ENCODE measurements at regions of chr17 and their contacts with region 1.

Region 1: DNA sequence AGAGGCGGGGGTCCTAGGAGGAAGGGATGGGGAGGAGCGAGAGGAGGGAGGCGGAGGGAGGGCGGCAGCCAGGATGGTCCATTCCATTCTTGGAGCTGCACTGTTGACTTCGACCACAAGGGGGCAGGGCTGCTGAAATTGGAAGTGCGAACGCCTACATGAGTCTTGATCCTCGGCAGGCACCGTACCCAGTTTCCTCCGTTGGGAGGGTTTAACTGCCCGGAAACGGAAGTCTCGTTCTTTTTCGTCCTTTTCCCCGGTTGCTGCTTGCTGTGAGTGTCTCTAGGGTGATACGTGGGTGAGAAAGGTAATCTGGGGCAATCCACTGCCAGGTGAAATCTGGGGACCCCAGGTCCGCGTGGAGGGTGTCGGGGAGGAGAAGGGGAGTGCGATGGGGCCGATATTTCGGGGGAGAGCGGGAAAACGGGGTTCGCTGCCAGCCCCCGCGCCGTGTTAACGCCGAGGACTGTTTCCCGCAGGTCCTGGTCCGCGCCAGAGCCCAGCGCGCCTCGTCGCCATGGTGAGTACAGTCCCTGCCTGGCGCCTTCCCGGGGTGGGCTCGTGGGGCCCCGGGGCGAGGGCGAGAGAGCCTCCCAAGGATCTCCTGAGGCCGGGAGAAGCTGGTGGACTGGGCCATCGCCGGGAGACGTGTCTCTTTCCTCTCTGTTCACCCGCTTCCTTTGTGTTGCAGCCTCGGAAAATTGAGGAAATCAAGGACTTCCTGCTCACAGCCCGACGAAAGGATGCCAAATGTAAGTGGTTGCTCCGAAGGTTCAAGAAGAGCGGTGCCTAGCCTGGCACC is at the start of gene RPL38:
- DNase-seq: peak; percentile 95 to 97
- H3K4me3 ChIP-seq: peak within 1 kb of the TSS; percentile 77 to 93
- H3K27ac ChIP-seq: peak within 1 kb of the TSS; percentile 79 to 80
- H3K4me1 ChIP-seq: peaks cover 0 to 46% (median 29%) of the 10 kb centered on the region in 4 donors
- H3K27me3 ChIP-seq: peaks cover 0 to 38% of the 10 kb centered on the region in 2 donors
- CTCF ChIP-seq: peak; percentile 93 to 97

Region 2: GRCh38 chr17:73092523-73093135 is 1111.0 kb before region 1 on chr17 and contains the start of gene SLC39A11:
- intact Hi-C with region 1: loop called (anchors 10 kb)
- DNase-seq: peak; percentile 93 to 97
- H3K4me3 ChIP-seq: peak within 1 kb of the TSS; percentile 61 to 78
- H3K27ac ChIP-seq: peak within 1 kb of the TSS; percentile 81 to 84
- H3K4me1 ChIP-seq: peaks cover 0 to 59% (median 43%) of the 10 kb centered on the region in 4 donors
- H3K27me3 ChIP-seq: no peaks in the 10 kb centered on the region
- CTCF ChIP-seq: no peak

Region 3: GRCh38 chr17:73643001-73643851 is 560.4 kb before region 1 on chr17:
- intact Hi-C with region 1: no loop called
- DNase-seq: no peak
- H3K4me3 ChIP-seq: peak overlapping the region; percentile 49 to 59
- H3K27ac ChIP-seq: peak overlapping the region in 1 of 2 donors; percentile 60
- H3K4me1 ChIP-seq: peaks cover 0 to 58% (median 40%) of the 10 kb centered on the region in 4 donors
- H3K27me3 ChIP-seq: peaks cover 0 to 62% of the 10 kb centered on the region in 2 donors
- CTCF ChIP-seq: no peak

Region 4: DNA sequence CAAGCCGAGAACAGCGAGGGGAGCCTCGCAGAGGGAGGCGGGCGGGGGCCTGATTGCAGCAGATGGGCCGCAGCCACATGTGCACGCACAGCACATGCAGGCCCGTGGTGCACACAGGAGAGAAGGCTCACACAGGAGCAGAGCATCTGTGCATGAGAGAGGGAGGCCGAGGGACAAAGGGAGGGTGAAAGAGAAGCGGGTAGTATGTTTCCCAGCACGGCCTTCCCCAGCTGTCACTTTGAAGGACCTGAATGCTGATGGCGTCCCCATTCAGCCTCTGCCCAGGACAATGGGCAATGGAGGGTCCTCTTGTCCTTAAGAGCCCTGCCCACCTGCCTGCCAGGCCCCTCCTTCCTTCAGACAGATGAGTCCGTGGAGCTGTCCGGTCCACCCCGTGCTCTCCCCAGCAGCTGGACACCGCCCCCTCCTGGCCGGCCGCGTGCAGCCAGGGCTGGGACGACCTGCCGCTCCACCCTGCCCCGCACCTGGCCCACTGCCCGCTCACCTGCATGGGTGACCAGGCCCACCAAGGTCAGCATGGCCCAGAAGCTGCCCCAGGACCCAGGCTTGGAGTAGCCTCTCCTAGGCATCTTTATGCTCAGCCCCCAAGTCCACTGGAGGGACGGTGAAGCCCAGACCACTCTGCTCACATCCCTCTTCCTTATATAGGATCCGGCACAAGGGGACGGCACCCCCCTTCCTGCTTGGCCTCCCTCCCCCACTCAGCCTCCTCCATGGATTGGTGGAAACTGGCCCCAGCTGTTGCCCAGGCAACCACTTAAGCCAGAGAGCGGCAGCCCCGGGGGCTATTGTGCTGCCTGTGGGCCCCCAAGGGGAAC is 157.8 kb after region 1 on chr17 and contains the start of gene BTBD17:
- intact Hi-C with region 1: loop called (anchors 5 kb)
- DNase-seq: no peak
- H3K4me3 ChIP-seq: no peak within 1 kb of the TSS
- H3K27ac ChIP-seq: no peak within 1 kb of the TSS
- H3K4me1 ChIP-seq: peaks cover 0 to 17% (median 8%) of the 10 kb centered on the region in 4 donors
- H3K27me3 ChIP-seq: peaks cover 0 to 80% of the 10 kb centered on the region in 2 donors
- CTCF ChIP-seq: peak; percentile 33 to 47

Region 5: DNA sequence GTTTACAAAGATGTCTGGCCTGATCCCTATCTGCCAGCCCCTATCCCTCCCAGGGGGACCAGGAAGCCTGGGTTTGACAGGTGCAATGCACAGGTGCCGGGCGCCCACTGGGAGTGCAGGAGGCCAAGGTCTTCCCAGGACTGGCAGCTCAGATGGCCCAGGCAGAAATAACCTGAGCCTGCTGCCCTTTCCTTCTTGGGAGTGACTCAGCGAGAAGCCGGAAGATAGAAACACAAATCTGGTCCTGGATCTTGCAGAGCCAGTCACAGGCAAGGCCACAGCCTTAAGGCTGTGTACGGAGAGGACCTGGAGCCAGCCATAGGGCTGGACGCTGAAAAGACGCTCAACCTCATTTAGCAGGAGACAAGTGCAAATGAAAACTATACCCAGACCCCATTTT is 191.3 kb after region 1 on chr17:
- intact Hi-C with region 1: no loop called
- DNase-seq: no peak
- H3K4me3 ChIP-seq: no peak overlapping the region
- H3K27ac ChIP-seq: no peak overlapping the region
- H3K4me1 ChIP-seq: no peaks in the 10 kb centered on the region
- H3K27me3 ChIP-seq: no peaks in the 10 kb centered on the region
- CTCF ChIP-seq: no peak

Region 6: GRCh38 chr17:74513987-74514631 is 310.5 kb after region 1 on chr17:
- intact Hi-C with region 1: no loop called
- DNase-seq: peak in 1 of 2 donors; percentile 38
- H3K4me3 ChIP-seq: no peak overlapping the region
- H3K27ac ChIP-seq: no peak overlapping the region
- H3K4me1 ChIP-seq: no peaks in the 10 kb centered on the region
- H3K27me3 ChIP-seq: peaks cover 0 to 12% of the 10 kb centered on the region in 2 donors
- CTCF ChIP-seq: no peak

Region 7: GRCh38 chr17:74776044-74776977 is 572.7 kb after region 1 on chr17 and contains the start of gene NAT9:
- intact Hi-C with region 1: loop called (anchors 10 kb)
- DNase-seq: peak; percentile 97 to 98
- H3K4me3 ChIP-seq: peak within 1 kb of the TSS; percentile 74 to 78
- H3K27ac ChIP-seq: peak within 1 kb of the TSS; percentile 76 to 80
- H3K4me1 ChIP-seq: peaks cover 0 to 32% (median 23%) of the 10 kb centered on the region in 4 donors
- H3K27me3 ChIP-seq: no peaks in the 10 kb centered on the region
- CTCF ChIP-seq: peak in 1 of 2 experiments; percentile 32